ENCODE measurements at regions of chr2 and their contacts with region 1.

Region 1: DNA sequence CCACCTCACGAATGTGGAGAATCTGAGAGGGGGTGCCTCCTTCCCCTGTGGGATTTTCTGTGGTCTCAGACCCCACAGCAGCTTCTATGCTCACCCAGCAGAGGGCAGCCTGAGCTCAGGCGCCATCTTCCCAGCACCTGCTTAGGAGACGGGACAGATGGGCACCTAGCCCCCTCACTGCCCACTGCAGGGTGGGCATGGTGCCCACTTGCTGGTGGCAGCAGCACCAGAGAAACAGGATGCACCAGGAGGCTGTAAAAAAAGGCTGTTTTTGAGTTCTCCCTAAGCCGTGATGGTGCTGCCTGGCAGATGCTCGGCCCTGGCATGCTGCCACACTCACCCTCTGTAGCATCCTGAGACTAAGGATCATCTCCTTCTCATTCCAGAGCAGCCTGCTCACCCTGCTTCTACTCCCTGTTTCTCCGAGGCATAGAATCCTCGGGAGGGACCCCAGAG is 19.1 kb upstream of the SLC20A1 start:
- DNase-seq: peak; percentile 79
- H3K4me3 Mint-ChIP-seq: peak overlapping the region; percentile 46
- H3K27ac Mint-ChIP-seq: peak overlapping the region; percentile 88
- H3K4me1 Mint-ChIP-seq: peaks cover 67% of the 10 kb centered on the region
- H3K27me3 Mint-ChIP-seq: peaks cover 2% of the 10 kb centered on the region

Region 2: GRCh38 chr2:112474844-112475486 is 151.7 kb before region 1 on chr2:
- CTCF ChIA-PET with region 1: no interaction called
- POLR2A ChIA-PET with region 1: no interaction called
- intact Hi-C with region 1: no loop called
- DNase-seq: no peak
- H3K4me3 Mint-ChIP-seq: no peak overlapping the region
- H3K27ac Mint-ChIP-seq: no peak overlapping the region
- H3K4me1 Mint-ChIP-seq: peaks cover 2% of the 10 kb centered on the region
- H3K27me3 Mint-ChIP-seq: no peaks in the 10 kb centered on the region

Region 3: DNA sequence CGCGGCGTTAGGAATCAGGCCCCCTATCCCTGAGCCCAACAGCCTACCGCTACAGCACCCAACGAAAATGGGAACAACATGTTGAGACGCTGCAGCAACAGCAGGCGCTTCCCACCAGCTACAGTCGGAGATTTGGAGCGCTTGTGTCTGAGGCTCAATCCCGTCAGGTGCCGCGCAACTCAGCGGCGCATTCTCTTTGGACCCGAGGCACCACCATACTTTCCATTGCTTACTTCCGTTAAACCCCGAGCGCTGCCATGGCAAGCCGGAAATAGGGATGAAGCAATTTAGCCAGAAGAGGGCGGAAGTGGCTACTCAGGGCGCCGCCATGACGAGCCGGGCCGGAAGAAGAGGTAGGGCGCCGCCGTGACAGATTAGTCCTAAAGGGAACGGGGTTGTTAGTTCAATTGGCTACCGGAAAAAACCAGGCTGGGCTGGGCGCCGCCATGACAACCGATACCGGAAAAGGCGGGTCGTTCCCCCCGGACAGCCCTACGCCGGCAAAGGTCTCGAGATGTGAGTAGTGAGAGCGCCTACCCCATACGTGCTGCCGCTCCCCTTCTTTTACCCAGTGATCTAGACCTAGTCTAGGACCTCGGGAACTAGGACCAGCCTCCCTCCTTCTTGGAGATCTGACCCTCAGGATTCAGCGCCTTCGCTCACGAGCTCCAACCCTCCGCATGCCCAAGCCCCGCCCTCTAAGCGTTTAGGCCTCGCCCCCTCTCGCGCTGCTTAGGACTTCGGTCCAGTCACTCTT is 42.3 kb before region 1 on chr2 and contains the start of gene CHCHD5:
- CTCF ChIA-PET with region 1: interaction called, 4 read pairs
- POLR2A ChIA-PET with region 1: interaction called, 3 read pairs
- intact Hi-C with region 1: loop called (anchors 2 kb)
- DNase-seq: peak; percentile 97
- H3K4me3 Mint-ChIP-seq: peak within 1 kb of the TSS; percentile 97
- H3K27ac Mint-ChIP-seq: peak within 1 kb of the TSS; percentile 99
- H3K4me1 Mint-ChIP-seq: peaks cover 30% of the 10 kb centered on the region
- H3K27me3 Mint-ChIP-seq: no peaks in the 10 kb centered on the region
- total RNA-seq, gene CHCHD5: 39.3 to 41.4 TPM

Region 4: GRCh38 chr2:112685271-112685884 is 58.7 kb after region 1 on chr2:
- CTCF ChIA-PET with region 1: interaction called, 91 read pairs
- POLR2A ChIA-PET with region 1: no interaction called
- intact Hi-C with region 1: no loop called
- DNase-seq: no peak
- H3K4me3 Mint-ChIP-seq: no peak overlapping the region
- H3K27ac Mint-ChIP-seq: no peak overlapping the region
- H3K4me1 Mint-ChIP-seq: peaks cover 7% of the 10 kb centered on the region
- H3K27me3 Mint-ChIP-seq: no peaks in the 10 kb centered on the region

Region 5: DNA sequence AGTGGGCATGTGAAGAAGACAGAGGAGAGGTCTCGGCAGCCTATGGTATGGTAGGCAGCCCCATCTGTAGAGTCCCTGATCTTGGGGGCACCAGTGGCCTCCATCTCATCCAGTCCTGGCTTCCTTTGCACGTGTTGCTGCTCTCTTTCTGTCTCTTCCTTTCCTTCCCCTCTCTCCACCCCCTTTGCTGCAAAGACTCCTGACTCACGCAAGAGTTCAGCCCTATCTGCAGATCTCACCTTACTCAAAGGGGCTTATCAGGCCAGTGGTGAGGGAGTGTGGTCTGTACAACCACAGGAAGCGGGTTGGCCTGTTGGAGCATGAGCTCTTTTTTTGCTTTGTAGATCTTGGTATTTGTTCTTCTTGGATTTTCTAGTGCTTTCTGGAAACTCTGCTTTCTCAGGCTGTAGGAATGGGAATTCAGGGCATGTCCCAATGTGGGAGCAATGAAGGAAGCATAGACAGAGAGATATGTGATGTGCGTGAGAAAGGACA is 79.6 kb after region 1 on chr2:
- CTCF ChIA-PET with region 1: interaction called, 19 read pairs
- POLR2A ChIA-PET with region 1: interaction called, 5 read pairs
- intact Hi-C with region 1: loop called (anchors 1 kb)
- DNase-seq: peak; percentile 89
- H3K4me3 Mint-ChIP-seq: no peak overlapping the region
- H3K27ac Mint-ChIP-seq: peak overlapping the region; percentile 52
- H3K4me1 Mint-ChIP-seq: peaks cover 47% of the 10 kb centered on the region
- H3K27me3 Mint-ChIP-seq: peaks cover 6% of the 10 kb centered on the region

Region 6: DNA sequence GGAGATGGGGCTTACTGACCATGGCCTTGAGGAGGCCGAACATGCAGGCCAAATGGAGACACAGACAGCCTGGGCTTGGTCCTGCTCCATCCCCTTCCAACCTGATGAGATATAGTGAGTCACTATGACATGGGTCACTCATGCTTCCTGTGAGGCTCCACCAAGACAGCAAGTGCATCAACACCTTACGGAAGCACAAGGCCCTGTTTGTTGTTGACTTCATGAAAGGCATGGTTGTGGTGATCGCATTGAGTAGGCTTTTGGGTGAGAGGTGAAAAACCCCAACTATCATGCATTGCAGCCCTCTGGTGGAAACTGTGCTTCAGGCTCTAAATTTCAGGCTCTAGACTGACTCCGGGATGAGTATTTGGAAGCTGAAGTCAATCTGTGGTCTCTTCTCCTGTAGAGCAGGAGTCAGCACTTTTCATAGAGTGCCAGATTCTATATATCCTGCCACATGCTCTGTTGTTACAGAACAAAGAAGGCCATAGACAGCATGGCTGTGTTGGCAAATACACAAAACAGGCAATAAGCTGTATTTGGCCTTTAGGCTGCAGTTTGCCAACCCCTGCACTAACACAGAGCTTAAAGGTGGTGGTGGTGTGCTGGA is 294.4 kb after region 1 on chr2:
- CTCF ChIA-PET with region 1: no interaction called
- POLR2A ChIA-PET with region 1: no interaction called
- intact Hi-C with region 1: loop called (anchors 1 kb)
- DNase-seq: peak; percentile 54
- H3K4me3 Mint-ChIP-seq: no peak overlapping the region
- H3K27ac Mint-ChIP-seq: peak overlapping the region; percentile 20
- H3K4me1 Mint-ChIP-seq: peaks cover 20% of the 10 kb centered on the region
- H3K27me3 Mint-ChIP-seq: peaks cover 3% of the 10 kb centered on the region

Measured in activated CD4-positive, alpha-beta memory T cell treated with anti-CD3 and anti-CD28 coated beads for 36 hours (primary cell).